ENCODE measurements at regions of chr2 and their contacts with region 1.

Region 1: GRCh38 chr2:118003396-118003824 is 10.5 kb downstream of the CCDC93 start:
- DNase-seq: peak; percentile 25
- ATAC-seq: peak; percentile 99
- H3K4me3 Mint-ChIP-seq: no peak overlapping the region
- H3K27ac Mint-ChIP-seq: no peak overlapping the region
- H3K4me1 Mint-ChIP-seq: peaks cover 2% of the 10 kb centered on the region; the same call in 1 of the 2 replicates
- H3K27me3 Mint-ChIP-seq: no peaks in the 10 kb centered on the region
- CTCF ChIP-seq: peak; percentile 65; the same call in 1 of the 2 replicates

Region 2: GRCh38 chr2:117814417-117815264 is 188.8 kb before region 1 on chr2 and contains the start of gene DDX18:
- CTCF ChIA-PET with region 1: interaction called, 21 read pairs
- POLR2A ChIA-PET with region 1: no interaction called
- DNase-seq: peak; percentile 95
- ATAC-seq: peak; percentile 95
- H3K4me3 Mint-ChIP-seq: peak within 1 kb of the TSS; percentile 94
- H3K27ac Mint-ChIP-seq: peak within 1 kb of the TSS; percentile 98
- H3K4me1 Mint-ChIP-seq: peaks cover 28% of the 10 kb centered on the region
- H3K27me3 Mint-ChIP-seq: no peaks in the 10 kb centered on the region
- CTCF ChIP-seq: peak; percentile 93
- total RNA-seq, gene DDX18: 76.2 to 107 TPM (median 83.3 TPM) in 3 replicates

Region 3: DNA sequence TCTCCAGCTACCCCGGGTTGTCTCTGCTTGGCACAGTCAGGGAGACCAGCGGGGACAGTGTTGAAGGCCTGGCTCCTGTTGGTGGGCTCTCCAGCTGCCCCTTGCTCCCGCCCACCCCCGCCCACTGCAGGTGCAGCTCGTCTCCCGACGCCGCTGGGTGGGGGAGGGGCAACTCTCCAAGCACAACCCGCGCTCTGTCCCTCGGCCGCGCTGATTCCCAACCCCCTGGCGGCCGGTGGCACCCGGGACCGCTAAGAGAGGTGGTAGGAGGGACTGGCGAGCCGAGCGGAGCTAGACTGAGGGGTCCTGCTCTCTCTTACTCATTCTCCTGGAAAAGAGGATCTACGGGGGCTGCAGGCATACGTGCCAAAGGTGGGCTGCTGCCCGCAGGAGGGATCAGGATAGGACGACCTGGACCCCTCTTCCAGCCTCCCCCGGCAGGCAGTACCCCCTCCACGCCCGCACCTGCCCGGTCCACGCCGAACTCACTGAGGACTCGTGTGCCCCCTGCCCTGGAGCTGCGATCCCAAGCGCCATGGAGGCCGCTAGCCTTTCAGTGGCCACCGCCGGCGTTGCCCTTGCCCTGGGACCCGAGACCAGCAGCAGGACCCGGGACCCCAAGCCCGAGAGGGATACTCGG is 144.4 kb before region 1 on chr2:
- CTCF ChIA-PET with region 1: interaction called, 10 read pairs
- POLR2A ChIA-PET with region 1: no interaction called
- DNase-seq: peak; percentile 75
- ATAC-seq: peak; percentile 82
- H3K4me3 Mint-ChIP-seq: peak overlapping the region; percentile 55
- H3K27ac Mint-ChIP-seq: no peak overlapping the region
- H3K4me1 Mint-ChIP-seq: peaks cover 4% of the 10 kb centered on the region
- H3K27me3 Mint-ChIP-seq: peaks cover 42% of the 10 kb centered on the region
- CTCF ChIP-seq: no peak

Region 4: GRCh38 chr2:117987121-117987520 is 16.3 kb before region 1 on chr2:
- CTCF ChIA-PET with region 1: interaction called, 22 read pairs
- POLR2A ChIA-PET with region 1: interaction called, 4 read pairs
- DNase-seq: no peak
- ATAC-seq: no peak
- H3K4me3 Mint-ChIP-seq: no peak overlapping the region
- H3K27ac Mint-ChIP-seq: no peak overlapping the region
- H3K4me1 Mint-ChIP-seq: no peaks in the 10 kb centered on the region
- H3K27me3 Mint-ChIP-seq: no peaks in the 10 kb centered on the region
- CTCF ChIP-seq: no peak

Region 5: DNA sequence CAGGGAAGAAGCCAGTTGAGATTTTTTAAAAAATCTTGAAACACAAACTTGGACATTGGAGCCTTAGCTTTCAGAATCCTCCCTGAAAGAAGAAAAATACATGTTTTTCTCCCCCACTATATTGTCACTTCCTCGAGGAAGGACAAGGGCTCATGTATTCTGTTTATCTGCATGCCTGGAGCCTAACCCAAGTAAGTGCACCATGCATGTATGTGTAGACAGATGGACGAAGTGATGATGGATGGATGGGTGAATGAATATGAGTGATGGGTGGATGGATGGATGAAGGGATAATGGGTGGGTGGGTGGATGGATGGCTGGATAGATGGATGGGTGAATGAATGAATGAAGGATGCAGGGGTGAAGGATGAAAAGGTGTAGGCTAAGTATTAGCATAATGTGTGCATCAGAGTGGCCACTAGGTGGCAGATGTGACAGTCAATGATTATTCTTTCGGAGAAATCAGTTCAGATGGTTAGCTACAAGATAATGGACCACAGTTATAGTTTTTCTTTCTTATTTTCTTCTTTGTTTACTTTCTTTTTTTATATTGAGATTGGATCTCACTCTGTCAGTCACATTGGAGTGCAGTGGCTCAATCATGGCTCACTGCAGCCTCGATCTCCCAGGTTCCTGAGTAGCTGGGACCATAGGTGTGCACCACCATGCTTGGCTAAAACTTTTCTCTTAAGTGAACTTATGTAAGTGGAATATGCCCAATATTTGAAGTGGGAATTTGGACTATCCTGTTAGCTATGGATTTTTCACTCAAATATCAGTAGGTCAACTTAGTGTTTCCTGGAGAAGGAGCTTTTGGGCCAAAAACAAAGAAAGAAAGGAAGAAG is 29.0 kb after region 1 on chr2:
- CTCF ChIA-PET with region 1: interaction called, 14 read pairs
- POLR2A ChIA-PET with region 1: no interaction called
- DNase-seq: peak; percentile 38
- ATAC-seq: peak; percentile 74
- H3K4me3 Mint-ChIP-seq: no peak overlapping the region
- H3K27ac Mint-ChIP-seq: no peak overlapping the region
- H3K4me1 Mint-ChIP-seq: peaks cover 9% of the 10 kb centered on the region
- H3K27me3 Mint-ChIP-seq: peaks cover 21% of the 10 kb centered on the region
- CTCF ChIP-seq: peak; percentile 77